Dorsolateral prefrontal cortex (tissue), 120 donors: ENCODE measurements at regions of chr15 and their contacts with region 1.

Region 1: DNA sequence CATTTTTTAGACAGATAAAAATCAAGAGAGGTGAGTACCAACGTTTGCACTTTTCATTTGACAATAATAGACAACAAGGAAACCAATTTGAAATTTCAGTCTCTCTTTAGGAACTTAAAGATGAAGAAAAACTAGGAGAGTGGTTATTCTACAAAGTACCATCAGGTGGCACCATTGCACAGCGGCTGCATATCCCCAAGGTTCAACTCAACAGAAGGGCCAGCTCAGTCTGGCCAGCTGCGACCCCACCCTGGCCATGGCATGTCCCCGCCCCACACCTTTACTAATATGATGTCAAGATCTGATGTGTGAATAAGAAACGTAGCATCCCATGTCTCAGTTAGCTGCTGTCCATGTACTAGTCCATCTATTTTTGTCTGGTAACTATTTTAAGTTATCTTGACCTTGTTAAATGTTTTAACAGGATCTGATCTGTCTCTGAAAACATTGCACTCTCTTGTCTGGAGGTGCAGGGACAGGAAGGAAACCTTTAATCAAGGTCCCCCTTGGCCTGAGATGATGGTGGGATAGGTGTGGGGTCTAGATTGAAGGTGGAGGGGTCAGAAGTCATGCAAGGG is 35.5 kb upstream of the CGNL1 start:
- DNase-seq: peak in 6 of 10 donors; percentile 37 to 60 (median 50)
- H3K4me3 ChIP-seq: no peak overlapping the region
- H3K27ac ChIP-seq: no peak overlapping the region
- H3K27me3 ChIP-seq: no peaks in the 10 kb centered on the region
- CTCF ChIP-seq: peak; percentile 80 to 99 (median 94)

Region 2: DNA sequence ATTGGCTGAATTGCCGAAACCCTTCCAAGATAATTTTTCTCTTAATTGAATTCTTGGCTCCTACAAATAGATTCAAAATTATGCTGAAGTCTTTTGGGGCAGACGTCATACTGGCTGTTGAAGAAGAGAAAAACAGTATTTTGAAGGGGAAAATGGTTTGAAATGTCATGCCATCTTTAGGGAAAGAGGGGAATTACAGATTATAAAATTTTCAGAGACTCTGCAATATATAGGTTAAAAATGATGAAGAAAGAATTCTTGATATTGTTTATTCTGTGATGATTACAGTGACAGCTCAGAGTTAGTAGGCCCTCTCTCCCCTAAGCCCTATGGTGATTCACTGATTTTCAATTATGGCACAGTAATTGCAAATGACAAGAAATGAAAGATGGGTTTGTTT is 121.6 kb after region 1 on chr15:
- intact Hi-C with region 1: loop called in 1 of 2 experiments (anchors 2 kb)
- DNase-seq: no peak
- H3K4me3 ChIP-seq: no peak overlapping the region
- H3K27ac ChIP-seq: peak overlapping the region in 37 of 59 donors; percentile 9 to 86 (median 67)
- H3K27me3 ChIP-seq: no peaks in the 10 kb centered on the region
- CTCF ChIP-seq: peak in 52 of 56 donors; percentile 10 to 63 (median 39)

Region 3: DNA sequence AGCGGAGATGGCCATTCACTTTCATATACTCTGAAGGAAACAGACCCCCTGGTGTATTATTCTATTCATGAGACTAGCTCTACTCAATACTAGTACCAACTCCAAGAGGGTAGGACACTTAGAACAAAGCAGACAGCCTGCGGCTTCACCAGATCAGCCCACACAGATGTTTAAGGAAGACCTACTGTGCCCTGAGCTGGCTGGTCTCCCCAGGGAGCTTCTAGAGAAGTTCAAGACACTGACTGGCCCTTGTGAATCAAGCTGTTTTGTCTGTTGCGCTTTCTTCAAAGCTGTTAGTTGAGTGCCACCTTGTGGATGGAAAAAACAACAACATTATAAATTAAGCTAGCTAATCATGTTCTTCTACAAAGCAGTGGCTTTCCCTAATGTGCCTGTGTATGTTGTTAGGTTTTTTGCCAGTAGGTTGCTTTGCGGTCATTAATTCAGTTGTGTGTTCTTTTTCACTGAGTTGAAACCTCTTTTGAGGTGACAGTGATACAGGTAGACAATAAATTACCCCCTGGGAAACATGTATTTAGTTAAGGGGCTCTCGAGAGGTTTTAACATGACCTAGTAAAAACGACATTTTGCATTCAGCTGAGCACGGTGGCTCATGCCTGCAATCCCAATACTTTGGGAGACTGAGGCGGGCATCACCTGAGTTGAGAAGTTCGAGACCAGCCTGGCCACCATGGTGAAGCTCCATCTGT is 186.8 kb after region 1 on chr15:
- intact Hi-C with region 1: loop called (anchors 1 to 2 kb)
- DNase-seq: peak in 1 of 10 donors; percentile 36
- H3K4me3 ChIP-seq: no peak overlapping the region
- H3K27ac ChIP-seq: peak overlapping the region in 16 of 59 donors; percentile 4 to 68 (median 40)
- H3K27me3 ChIP-seq: peaks cover 0 to 2% (median 0%) of the 10 kb centered on the region in 45 donors
- CTCF ChIP-seq: peak; percentile 58 to 97 (median 79)

Region 4: GRCh38 chr15:57541805-57542504 is 201.2 kb after region 1 on chr15:
- intact Hi-C with region 1: loop called in 1 of 2 experiments (anchors 5 kb)
- DNase-seq: peak; percentile 49 to 85 (median 74)
- H3K4me3 ChIP-seq: no peak overlapping the region
- H3K27ac ChIP-seq: peak overlapping the region in 1 of 59 donors; percentile 43
- H3K27me3 ChIP-seq: no peaks in the 10 kb centered on the region
- CTCF ChIP-seq: peak; percentile 56 to 88 (median 77)